Endothelial cell of umbilical vein (primary cell): ENCODE measurements at regions of chr6 and their contacts with region 1.

Region 1: DNA sequence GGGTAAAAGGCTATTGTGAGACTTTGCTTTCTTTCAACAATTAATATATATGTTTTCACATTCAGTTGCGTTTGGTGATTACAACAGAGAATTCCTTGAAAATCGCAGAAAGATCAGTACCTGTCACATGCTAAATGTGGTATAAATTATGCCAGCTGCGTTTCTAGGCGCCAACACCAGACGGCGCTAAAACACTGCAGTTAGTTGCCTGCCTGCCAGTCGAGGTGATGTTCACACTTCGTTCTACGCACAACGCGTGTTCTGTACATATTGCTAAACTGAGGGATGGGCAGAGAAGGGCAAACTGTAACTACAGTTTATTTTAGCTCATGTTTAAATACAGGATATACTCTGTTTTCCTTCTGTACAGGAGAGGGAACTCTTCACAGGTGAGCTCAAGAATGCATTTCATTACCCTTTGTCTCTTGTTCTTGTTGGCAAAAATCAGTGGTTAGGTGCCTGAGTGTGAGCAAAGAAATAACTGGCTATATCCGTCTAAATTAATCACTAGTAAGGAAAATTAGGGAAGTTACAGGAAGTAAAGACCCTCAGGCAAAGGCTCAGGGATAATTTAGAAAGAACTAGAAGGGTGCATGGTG is 100.1 kb upstream of the RGS17 start:
- DNase-seq: peak; percentile 33
- H3K4me3 ChIP-seq: no peak overlapping the region
- H3K27ac ChIP-seq: no peak overlapping the region
- H3K4me1 ChIP-seq: no peaks in the 10 kb centered on the region
- H3K27me3 ChIP-seq: peaks cover 0 to 3% of the 10 kb centered on the region in 2 experiments
- CTCF ChIP-seq: peak; percentile 74 to 92
- POLR2A ChIP-seq: no peak

Region 2: DNA sequence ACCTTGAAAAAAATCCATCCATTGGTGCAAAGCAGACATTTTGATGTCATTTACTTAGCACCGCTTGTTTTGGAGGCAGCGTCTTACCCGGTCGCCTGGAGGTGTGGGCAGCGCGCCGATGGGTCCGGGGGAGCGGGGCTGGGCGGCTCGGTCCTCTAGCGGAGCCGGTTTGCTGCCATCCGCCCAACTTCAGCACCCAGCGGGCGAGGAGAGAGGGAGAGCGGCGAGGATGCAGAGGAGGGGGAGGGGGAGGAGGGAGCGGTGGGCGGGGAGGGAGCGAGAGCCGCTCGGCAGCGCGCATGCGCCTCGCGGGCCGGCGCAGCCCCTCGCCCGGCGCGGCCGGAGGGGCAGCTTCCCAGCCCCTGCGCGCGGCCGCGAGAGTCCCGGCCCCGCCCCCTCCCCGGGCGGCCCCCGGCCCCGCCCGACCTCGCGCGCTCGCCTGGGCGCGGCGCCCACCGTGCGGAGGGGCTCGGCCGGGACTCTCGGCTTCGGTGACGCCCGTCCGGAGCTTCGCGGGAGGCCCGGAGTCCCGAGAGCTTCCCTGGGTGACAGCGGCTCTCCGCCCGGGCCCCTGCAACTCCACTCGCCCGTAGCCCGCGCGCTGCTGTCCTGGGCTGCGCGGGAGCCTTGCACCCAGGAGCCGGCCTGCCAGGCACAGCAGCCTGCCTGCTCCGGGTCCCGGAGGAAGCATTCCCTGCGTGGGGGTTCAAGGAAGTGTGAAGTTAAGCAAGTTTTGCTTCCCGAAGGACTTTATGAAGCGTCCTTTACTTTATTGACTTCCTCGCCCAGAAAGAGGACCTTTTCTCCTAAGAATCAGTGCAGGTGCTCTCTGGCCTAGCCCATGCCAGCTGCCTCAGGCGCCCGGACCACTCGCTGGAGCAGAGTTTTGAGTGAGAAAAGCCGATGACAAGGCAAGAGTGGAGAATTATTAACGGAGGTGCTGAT is 99.8 kb before region 1 on chr6 and contains the start of gene RGS17:
- CTCF ChIA-PET with region 1: no interaction called
- POLR2A ChIA-PET with region 1: no interaction called
- dilution Hi-C with region 1: no loop called
- intact Hi-C with region 1: loop called (anchors 2 kb)
- DNase-seq: peak; percentile 57
- H3K4me3 ChIP-seq: peak within 1 kb of the TSS; percentile 69 to 76 (median 70)
- H3K27ac ChIP-seq: peak within 1 kb of the TSS; percentile 8
- H3K4me1 ChIP-seq: peaks cover 14% of the 10 kb centered on the region
- H3K27me3 ChIP-seq: peaks cover 9 to 15% of the 10 kb centered on the region in 2 experiments
- CTCF ChIP-seq: no peak
- POLR2A ChIP-seq: no peak
- total RNA-seq, gene RGS17: 1.1 and 2.3 TPM in 2 replicates

Region 3: GRCh38 chr6:153167061-153167891 is 63.9 kb before region 1 on chr6:
- CTCF ChIA-PET with region 1: no interaction called
- POLR2A ChIA-PET with region 1: no interaction called
- dilution Hi-C with region 1: no loop called
- intact Hi-C with region 1: no loop called
- DNase-seq: peak; percentile 79
- H3K4me3 ChIP-seq: no peak overlapping the region
- H3K27ac ChIP-seq: peak overlapping the region; percentile 75
- H3K4me1 ChIP-seq: peaks cover 19% of the 10 kb centered on the region
- H3K27me3 ChIP-seq: no peaks in the 10 kb centered on the region
- CTCF ChIP-seq: no peak
- POLR2A ChIP-seq: no peak

Region 4: GRCh38 chr6:153210083-153210482 is 21.1 kb before region 1 on chr6:
- CTCF ChIA-PET with region 1: interaction called, 14 read pairs
- POLR2A ChIA-PET with region 1: no interaction called
- dilution Hi-C with region 1: no loop called
- intact Hi-C with region 1: no loop called
- DNase-seq: no peak
- H3K4me3 ChIP-seq: no peak overlapping the region
- H3K27ac ChIP-seq: no peak overlapping the region
- H3K4me1 ChIP-seq: peaks cover 4% of the 10 kb centered on the region
- H3K27me3 ChIP-seq: peaks cover 0 to 8% of the 10 kb centered on the region in 2 experiments
- CTCF ChIP-seq: no peak
- POLR2A ChIP-seq: no peak

Region 5: DNA sequence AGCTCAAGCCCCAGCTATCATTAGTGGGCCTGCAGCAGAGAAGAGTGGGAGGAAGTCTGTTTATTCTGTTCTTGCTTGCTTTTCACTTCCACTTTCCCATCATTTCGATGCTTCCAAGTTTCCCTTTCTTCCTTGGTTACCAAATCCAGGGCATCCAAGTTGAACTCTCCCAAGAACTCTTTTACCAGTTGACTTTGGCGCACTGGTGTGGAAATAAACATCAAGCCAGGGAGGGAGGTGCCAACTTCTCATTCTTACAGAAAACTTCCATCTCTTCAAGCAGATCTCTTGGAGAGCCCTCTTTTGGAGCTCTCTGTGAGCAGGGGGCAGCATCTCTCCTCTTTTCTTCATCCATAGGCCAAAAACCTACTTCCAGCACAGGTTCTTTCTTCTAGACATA is 14.4 kb before region 1 on chr6:
- CTCF ChIA-PET with region 1: interaction called, 14 read pairs
- POLR2A ChIA-PET with region 1: no interaction called
- dilution Hi-C with region 1: no loop called
- intact Hi-C with region 1: no loop called
- DNase-seq: no peak
- H3K4me3 ChIP-seq: no peak overlapping the region
- H3K27ac ChIP-seq: no peak overlapping the region
- H3K4me1 ChIP-seq: no peaks in the 10 kb centered on the region
- H3K27me3 ChIP-seq: peaks cover 0 to 6% of the 10 kb centered on the region in 2 experiments
- CTCF ChIP-seq: no peak
- POLR2A ChIP-seq: no peak

Region 6: DNA sequence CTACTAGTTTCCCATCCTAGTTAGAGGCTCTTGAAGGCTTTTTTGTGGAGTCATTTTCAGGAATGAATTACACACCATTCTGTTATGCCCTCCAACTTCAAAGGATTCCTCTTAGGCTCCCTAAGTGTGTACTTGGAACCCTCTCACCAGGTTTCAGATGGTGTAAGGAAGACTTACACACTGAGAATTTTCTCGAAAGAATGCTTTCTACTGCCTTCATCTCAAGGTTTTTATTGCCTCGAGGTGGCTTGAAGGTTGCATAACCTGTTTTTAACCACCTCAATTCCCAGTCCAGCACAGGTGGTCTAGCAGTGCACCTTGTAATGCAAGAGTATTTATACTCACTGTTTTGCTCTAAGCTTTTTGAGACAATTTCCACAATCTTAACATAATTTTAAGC is 11.6 kb after region 1 on chr6:
- CTCF ChIA-PET with region 1: interaction called, 14 read pairs
- POLR2A ChIA-PET with region 1: no interaction called
- dilution Hi-C with region 1: no loop called
- intact Hi-C with region 1: no loop called
- DNase-seq: no peak
- H3K4me3 ChIP-seq: no peak overlapping the region
- H3K27ac ChIP-seq: no peak overlapping the region
- H3K4me1 ChIP-seq: no peaks in the 10 kb centered on the region
- H3K27me3 ChIP-seq: no peaks in the 10 kb centered on the region
- CTCF ChIP-seq: no peak
- POLR2A ChIP-seq: no peak

Region 7: DNA sequence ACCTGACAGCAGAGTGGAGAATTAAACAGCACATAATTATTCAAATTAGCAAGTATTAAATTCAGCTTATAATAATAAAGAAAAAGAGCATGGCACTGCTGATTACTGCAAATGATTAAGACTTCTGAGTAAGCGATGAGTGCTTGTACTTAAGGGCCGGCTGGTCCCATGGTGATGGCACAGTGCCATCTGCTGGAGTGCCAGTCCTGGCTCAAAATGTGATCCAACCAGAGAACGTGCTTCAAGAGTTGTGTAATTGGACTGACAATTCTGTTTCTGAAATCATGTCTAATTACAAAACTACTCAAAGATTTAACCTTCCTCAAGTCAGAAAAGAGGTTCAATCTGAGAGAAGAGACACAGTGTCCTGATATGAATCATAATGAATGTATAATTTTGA is 81.5 kb after region 1 on chr6:
- CTCF ChIA-PET with region 1: interaction called, 5 read pairs
- POLR2A ChIA-PET with region 1: no interaction called
- dilution Hi-C with region 1: no loop called
- intact Hi-C with region 1: loop called (anchors 1 kb)
- DNase-seq: peak; percentile 55
- H3K4me3 ChIP-seq: no peak overlapping the region
- H3K27ac ChIP-seq: no peak overlapping the region
- H3K4me1 ChIP-seq: no peaks in the 10 kb centered on the region
- H3K27me3 ChIP-seq: no peaks in the 10 kb centered on the region
- CTCF ChIP-seq: peak; percentile 32 to 34
- POLR2A ChIP-seq: no peak

Region 8: DNA sequence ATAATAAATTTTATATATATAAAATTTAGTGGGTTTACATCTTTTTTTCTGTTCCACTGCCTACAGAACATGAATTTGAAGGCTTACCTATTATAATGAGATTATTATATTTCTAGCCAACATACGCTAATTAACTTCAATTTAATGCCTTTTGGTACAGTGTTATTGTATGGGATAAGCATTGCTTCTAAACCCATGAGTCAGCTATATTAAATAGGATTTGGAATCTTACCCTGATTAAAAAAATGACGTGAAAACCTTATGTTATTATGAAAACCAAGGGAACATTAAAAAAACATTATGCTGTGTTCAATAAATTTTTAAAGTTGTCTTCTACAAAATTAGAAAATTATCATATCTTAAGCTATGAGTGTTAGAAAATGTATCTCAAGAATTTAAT is 233.9 kb after region 1 on chr6:
- CTCF ChIA-PET with region 1: no interaction called
- POLR2A ChIA-PET with region 1: no interaction called
- dilution Hi-C with region 1: no loop called
- intact Hi-C with region 1: no loop called
- DNase-seq: no peak
- H3K4me3 ChIP-seq: no peak overlapping the region
- H3K27ac ChIP-seq: no peak overlapping the region
- H3K4me1 ChIP-seq: no peaks in the 10 kb centered on the region
- H3K27me3 ChIP-seq: no peaks in the 10 kb centered on the region
- CTCF ChIP-seq: no peak
- POLR2A ChIP-seq: no peak

Region 9: GRCh38 chr6:153511896-153512496 is 280.8 kb after region 1 on chr6:
- CTCF ChIA-PET with region 1: interaction called, 5 read pairs
- POLR2A ChIA-PET with region 1: no interaction called
- dilution Hi-C with region 1: no loop called
- intact Hi-C with region 1: loop called (anchors 1 kb)
- DNase-seq: peak; percentile 7
- H3K4me3 ChIP-seq: no peak overlapping the region
- H3K27ac ChIP-seq: no peak overlapping the region
- H3K4me1 ChIP-seq: no peaks in the 10 kb centered on the region
- H3K27me3 ChIP-seq: no peaks in the 10 kb centered on the region
- CTCF ChIP-seq: peak; percentile 32 to 43
- POLR2A ChIP-seq: no peak